Aorta (tissue), 5 donors: ENCODE measurements at regions of chr11 and their contacts with region 1.

Region 1: DNA sequence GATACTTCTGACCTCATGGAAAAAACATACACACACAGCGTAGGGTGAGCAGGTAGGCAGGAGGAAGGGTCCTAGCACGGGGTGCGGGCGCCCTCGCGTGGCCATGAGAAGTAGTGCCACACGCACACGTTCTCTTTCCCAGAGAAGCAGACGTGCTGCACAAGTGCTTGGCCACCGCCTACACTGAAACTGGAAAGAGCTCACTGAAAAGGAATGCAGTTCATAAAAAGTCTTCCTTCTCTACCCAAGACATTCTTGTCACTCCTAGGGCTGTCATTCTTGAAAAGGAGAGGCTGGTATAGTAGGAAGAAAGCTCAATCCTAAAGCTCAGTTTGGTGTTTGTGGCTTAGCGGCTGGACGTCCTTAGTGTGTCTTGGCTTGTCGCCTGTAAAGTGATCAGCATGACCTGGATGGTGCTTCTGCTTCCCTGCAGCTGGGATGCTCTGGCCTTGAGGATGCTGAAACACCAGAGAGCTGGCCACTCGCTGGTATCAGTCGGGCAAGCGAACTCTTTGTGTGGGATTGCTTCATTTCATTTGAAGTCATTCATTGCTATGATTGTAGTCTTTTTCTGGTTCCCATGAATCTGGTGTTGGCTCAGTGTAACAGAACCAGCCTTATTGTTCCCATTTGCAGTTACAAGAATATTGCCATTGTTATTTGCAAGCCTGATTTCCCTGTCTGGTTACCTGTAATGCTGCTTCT is 303.8 kb downstream of the NTM start:
- DNase-seq: peak; percentile 62 to 88
- ATAC-seq: peak; percentile 82
- H3K4me3 ChIP-seq: no peak overlapping the region
- H3K27ac ChIP-seq: no peak overlapping the region
- H3K4me1 ChIP-seq: no peaks in the 10 kb centered on the region
- H3K27me3 ChIP-seq: no peaks in the 10 kb centered on the region

Region 2: GRCh38 chr11:131064373-131064991 is 609.7 kb before region 1 on chr11:
- intact Hi-C with region 1: loop called in 1 of 2 experiments (anchors 10 kb)
- DNase-seq: peak in 1 of 2 donors; percentile 78
- ATAC-seq: no peak
- H3K4me3 ChIP-seq: no peak overlapping the region
- H3K27ac ChIP-seq: no peak overlapping the region
- H3K4me1 ChIP-seq: no peaks in the 10 kb centered on the region
- H3K27me3 ChIP-seq: no peaks in the 10 kb centered on the region

Region 3: DNA sequence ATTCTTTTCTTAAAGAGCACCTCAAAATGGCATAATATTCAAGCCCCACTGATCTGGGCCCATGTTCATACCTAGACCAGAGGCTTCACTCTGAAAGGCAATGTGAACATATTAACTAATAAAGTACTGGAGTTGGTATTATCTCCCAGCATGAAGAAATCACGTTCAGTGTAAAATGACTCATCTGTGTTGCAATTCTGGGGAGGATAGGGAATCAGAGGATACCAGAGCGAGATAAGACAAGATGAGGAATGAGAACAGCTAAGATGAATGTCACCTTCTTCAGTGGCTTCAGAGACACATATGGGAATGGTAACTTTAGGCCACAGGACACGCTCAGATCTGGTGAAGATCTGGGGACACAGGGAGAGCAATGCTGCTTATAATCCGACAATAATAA is 182.7 kb before region 1 on chr11:
- intact Hi-C with region 1: no loop called
- DNase-seq: no peak
- ATAC-seq: no peak
- H3K4me3 ChIP-seq: no peak overlapping the region
- H3K27ac ChIP-seq: no peak overlapping the region
- H3K4me1 ChIP-seq: no peaks in the 10 kb centered on the region
- H3K27me3 ChIP-seq: no peaks in the 10 kb centered on the region

Region 4: GRCh38 chr11:131533998-131534397 is 140.2 kb before region 1 on chr11:
- intact Hi-C with region 1: no loop called
- DNase-seq: no peak
- ATAC-seq: no peak
- H3K4me3 ChIP-seq: no peak overlapping the region
- H3K27ac ChIP-seq: no peak overlapping the region
- H3K4me1 ChIP-seq: no peaks in the 10 kb centered on the region
- H3K27me3 ChIP-seq: no peaks in the 10 kb centered on the region

Region 5: DNA sequence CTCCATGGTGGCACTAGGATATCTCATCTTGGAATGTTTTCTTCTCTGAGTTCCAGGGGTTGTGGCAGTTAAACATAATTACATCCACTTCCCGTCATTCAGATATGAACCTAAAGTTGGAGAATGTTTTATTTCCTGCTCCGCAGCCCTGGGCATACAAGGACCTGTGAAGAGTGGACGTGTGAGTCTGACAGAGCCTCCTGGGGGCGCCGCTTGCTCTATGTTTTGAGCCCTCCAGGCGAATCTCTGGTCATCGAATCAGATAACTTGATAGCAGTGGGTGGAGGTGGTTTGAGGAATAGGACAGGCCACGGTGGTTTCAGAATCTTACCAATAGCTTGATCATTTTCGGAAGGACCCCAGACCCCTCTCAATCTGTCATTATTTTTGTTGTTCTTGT is 129.6 kb before region 1 on chr11:
- intact Hi-C with region 1: no loop called
- DNase-seq: no peak
- ATAC-seq: no peak
- H3K4me3 ChIP-seq: no peak overlapping the region
- H3K27ac ChIP-seq: no peak overlapping the region
- H3K4me1 ChIP-seq: peaks cover 0 to 4% of the 10 kb centered on the region in 2 donors
- H3K27me3 ChIP-seq: no peaks in the 10 kb centered on the region